ENCODE measurements at regions of chr6 and their contacts with region 1.

Region 1: DNA sequence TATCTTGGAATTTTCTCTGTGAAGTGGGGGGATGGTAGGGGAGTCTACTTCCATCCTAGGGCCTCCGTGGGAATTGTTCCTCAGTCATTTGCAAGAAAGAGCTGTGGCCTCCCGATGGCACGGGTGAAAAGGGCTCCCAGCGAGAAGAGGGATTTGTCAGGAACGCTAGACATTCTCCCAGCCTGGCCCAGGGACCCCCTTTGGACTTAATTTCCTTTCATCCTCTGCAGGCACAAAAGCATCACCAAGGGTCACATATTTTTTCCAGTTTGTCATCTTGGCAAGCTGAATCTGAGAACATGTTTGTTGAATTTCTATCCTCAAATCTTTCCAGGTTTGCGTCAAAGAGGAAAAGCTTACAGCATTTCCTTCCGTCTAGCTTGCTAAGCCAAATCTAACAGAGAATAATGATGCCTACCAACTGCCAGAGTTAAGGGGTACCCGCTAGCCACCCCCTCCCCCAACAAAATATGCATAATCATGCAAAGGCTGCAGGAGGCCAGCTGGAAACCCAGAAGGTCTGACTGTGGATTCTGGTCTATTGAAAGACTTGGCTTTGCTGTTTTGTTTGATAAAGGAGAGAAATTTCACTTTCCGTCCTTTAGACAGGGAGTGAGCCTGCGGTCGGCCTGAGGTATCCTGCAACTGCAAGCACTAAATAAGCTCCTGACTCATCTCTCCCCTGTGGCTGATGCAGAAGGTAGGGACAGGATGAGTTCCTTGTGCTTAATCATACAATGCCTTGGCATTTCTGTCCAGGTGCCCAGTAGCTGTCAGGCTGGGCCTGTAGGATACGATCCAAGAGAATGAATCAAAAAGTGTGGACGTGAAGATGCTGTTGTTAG is 23.1 kb downstream of the PSMG4 start:
- DNase-seq: no peak
- ATAC-seq: no peak
- H3K4me3 ChIP-seq: no peak overlapping the region
- H3K27ac ChIP-seq: no peak overlapping the region
- H3K4me1 ChIP-seq: no peaks in the 10 kb centered on the region
- H3K27me3 ChIP-seq: no peaks in the 10 kb centered on the region
- CTCF ChIP-seq: no peak
- EP300 ChIP-seq: no peak
- POLR2A ChIP-seq: no peak
- RAD21 ChIP-seq: no peak

Region 2: DNA sequence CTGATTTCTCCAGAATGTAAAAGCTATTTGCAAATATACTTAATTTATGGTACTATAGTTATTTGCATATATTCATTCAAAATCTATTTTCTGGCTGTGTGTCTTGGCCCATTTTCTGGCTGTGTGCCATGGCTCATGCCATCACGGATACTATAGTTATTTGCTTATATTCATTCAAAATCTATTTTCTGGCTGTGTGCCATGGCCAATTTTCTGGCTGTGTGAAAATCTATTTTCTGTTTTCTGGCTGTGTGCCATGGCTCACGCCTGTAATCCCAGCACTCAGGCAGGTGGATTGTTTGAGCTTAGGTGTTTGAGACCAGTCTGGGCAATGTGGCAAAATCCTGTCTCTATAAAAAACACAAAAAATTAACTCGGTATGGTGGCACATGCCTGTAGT is 242.5 kb before region 1 on chr6:
- CTCF ChIA-PET with region 1: no interaction called
- POLR2A ChIA-PET with region 1: no interaction called
- RAD21 ChIA-PET with region 1: no interaction called
- SMC1A ChIA-PET with region 1: no interaction called
- in situ Hi-C with region 1: no loop called
- intact Hi-C with region 1: no loop called
- DNase-seq: no peak
- ATAC-seq: no peak
- H3K4me3 ChIP-seq: no peak overlapping the region
- H3K27ac ChIP-seq: no peak overlapping the region
- H3K4me1 ChIP-seq: no peaks in the 10 kb centered on the region
- H3K27me3 ChIP-seq: peaks cover 3 to 4% of the 10 kb centered on the region in 2 experiments; a peak in 2 of 4 replicates
- CTCF ChIP-seq: no peak
- EP300 ChIP-seq: no peak
- POLR2A ChIP-seq: no peak
- RAD21 ChIP-seq: no peak

Region 3: GRCh38 chr6:3124667-3125066 is 157.2 kb before region 1 on chr6:
- CTCF ChIA-PET with region 1: interaction called, 3 read pairs
- POLR2A ChIA-PET with region 1: no interaction called
- RAD21 ChIA-PET with region 1: interaction called, 4 read pairs
- SMC1A ChIA-PET with region 1: interaction called, 4 read pairs
- in situ Hi-C with region 1: no loop called
- intact Hi-C with region 1: loop called (anchors 1 kb)
- DNase-seq: no peak
- ATAC-seq: no peak
- H3K4me3 ChIP-seq: no peak overlapping the region
- H3K27ac ChIP-seq: no peak overlapping the region
- H3K4me1 ChIP-seq: peaks cover 7% of the 10 kb centered on the region
- H3K27me3 ChIP-seq: no peaks in the 10 kb centered on the region
- CTCF ChIP-seq: no peak
- EP300 ChIP-seq: no peak
- POLR2A ChIP-seq: no peak
- RAD21 ChIP-seq: no peak

Region 4: DNA sequence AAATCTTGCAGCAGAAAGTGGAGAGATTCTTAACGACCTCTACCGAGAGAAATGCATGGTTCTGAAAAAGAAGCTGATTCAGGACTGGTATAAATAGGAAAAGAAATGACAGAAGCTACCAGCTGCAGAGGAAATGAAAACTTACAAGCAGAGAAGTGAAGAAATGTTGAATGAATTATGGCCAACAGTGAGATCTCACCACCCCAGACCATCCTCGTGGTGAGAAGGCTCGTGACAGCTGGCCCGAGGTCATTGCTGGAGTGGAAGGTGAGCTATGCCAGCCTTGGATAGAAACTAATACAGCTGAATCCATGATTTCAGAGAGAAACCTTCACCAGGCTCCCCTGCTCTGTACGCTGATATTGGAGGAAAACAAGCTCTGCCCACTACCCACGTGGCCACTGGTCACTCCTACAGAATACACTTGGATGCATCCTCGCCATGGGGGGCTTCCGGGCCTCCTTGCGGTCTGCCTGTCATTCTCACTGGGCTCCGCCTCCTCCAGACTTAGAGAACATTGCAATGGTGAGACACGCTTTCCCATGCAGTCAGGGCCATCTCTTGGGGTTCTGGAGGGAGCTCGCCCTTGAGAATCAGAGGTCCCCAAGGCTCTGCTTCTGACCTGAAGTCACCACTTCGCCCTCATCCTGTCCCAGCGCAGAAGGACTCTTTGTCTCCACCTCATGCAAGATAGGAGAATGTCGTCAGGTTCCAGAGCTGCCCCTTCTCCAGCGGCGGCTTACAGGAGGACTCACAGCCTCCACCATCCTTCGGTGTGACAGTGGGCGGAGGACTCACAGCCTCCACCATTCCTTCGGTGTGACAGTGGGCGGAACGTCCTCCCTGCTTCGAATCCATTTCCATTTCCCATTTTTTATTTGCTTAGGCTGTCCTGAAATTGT is 43.8 kb before region 1 on chr6:
- CTCF ChIA-PET with region 1: no interaction called
- POLR2A ChIA-PET with region 1: no interaction called
- RAD21 ChIA-PET with region 1: no interaction called
- SMC1A ChIA-PET with region 1: no interaction called
- in situ Hi-C with region 1: no loop called
- intact Hi-C with region 1: no loop called
- DNase-seq: no peak
- ATAC-seq: peak; percentile 32
- H3K4me3 ChIP-seq: no peak overlapping the region
- H3K27ac ChIP-seq: no peak overlapping the region
- H3K4me1 ChIP-seq: peaks cover 31% of the 10 kb centered on the region
- H3K27me3 ChIP-seq: peaks cover 0 to 3% of the 10 kb centered on the region in 2 experiments; a peak in 2 of 4 replicates
- CTCF ChIP-seq: no peak
- EP300 ChIP-seq: no peak
- POLR2A ChIP-seq: no peak
- RAD21 ChIP-seq: no peak

Region 5: DNA sequence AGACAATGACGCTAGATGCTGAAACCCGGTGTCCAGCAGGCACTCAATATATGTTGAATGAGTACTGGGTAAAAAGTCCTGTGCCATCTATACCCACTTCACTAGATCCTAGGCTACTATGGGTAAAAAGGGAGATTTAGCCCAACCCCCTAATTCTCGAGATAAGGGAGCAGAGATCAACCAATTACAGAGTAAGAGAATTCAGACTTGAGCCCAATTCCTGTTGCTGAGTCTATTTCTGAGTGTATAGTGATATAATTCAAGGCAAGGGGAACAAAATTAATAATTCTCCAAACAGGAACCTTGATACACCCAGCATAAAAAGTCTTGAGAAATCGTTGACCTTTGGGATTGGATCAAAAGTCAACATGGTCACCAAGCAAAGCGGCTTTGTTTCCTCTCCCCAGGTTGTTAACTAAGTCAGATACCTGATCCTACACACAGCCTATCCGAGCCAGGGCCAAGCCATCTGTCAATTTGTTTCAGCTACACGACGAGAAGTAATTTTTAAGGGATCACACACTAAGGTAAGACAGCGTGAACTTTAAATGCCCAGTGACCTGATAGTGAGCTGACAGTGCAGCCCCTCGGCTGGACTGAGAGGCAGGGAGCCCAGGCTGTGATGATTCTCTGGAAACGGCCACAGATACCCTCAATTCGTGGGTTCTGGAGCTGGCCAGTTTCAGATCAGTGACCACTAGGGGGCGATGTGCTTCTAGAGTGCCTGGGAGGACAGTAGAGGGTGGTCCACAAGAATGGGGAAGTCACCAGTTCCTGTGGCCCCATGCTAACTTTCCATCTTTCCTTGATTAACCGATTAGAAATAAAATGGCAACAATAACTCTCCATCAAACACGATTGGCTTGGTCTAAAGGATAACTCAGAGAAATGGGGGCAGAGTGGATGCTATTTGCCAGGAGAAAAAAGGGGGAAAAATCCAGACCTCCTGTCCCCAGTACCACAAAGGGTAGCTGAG is 128.8 kb after region 1 on chr6:
- CTCF ChIA-PET with region 1: interaction called, 9 read pairs
- POLR2A ChIA-PET with region 1: no interaction called
- RAD21 ChIA-PET with region 1: interaction called, 7 read pairs
- SMC1A ChIA-PET with region 1: interaction called, 6 read pairs
- in situ Hi-C with region 1: no loop called
- intact Hi-C with region 1: loop called (anchors 5 kb)
- DNase-seq: no peak
- ATAC-seq: peak; percentile 93
- H3K4me3 ChIP-seq: no peak overlapping the region
- H3K27ac ChIP-seq: no peak overlapping the region
- H3K4me1 ChIP-seq: peaks cover 9% of the 10 kb centered on the region
- H3K27me3 ChIP-seq: no peaks in the 10 kb centered on the region
- CTCF ChIP-seq: peak; percentile 55 to 75 (median 73)
- EP300 ChIP-seq: no peak
- POLR2A ChIP-seq: no peak
- RAD21 ChIP-seq: peak; percentile 68

Region 6: DNA sequence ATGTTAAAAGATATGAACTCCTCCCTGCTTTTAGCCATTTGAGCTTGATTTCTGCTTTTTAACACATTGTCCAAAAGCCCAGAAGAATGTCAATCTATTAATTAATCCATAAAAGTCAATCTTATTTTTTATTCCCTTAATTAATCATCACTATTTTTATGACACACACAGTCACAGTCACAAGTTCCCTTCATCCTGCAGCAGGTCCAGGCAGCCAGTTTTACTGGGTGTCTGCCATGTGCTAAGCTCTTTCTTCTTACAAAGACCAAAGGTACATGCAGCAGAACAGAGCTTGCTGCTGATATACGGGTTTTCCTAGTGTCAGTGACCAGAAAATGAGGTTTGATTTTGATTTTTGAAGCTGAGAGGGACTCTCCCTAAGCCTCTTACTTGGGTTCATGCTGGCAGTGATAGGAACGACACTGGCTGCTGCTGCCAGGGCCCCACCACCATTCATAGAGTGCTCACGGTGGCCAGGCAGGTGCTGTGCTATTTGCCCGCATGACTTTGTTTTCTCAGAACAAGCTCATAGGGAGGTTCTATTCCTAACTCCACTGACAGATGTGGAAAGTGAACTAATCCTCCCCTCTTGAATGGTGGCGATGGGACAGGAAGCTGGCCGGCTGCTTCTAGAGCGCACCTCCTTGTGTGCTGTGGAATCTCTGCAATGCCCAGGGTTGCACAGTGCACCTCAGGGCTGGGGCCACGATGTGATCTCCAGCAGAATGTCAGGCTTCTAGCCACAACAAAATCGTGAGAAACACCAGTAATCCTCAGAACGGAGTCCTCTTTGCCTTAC is 228.5 kb after region 1 on chr6:
- CTCF ChIA-PET with region 1: no interaction called
- POLR2A ChIA-PET with region 1: no interaction called
- RAD21 ChIA-PET with region 1: no interaction called
- SMC1A ChIA-PET with region 1: interaction called, 3 read pairs
- in situ Hi-C with region 1: no loop called
- intact Hi-C with region 1: loop called (anchors 5 kb)
- DNase-seq: no peak
- ATAC-seq: no peak
- H3K4me3 ChIP-seq: no peak overlapping the region
- H3K27ac ChIP-seq: no peak overlapping the region
- H3K4me1 ChIP-seq: no peaks in the 10 kb centered on the region
- H3K27me3 ChIP-seq: no peaks in the 10 kb centered on the region; a peak in 2 of 4 replicates
- CTCF ChIP-seq: no peak
- EP300 ChIP-seq: no peak
- POLR2A ChIP-seq: no peak
- RAD21 ChIP-seq: no peak

Region 7: GRCh38 chr6:3732345-3733141 is 450.7 kb after region 1 on chr6:
- CTCF ChIA-PET with region 1: interaction called, 39 read pairs
- POLR2A ChIA-PET with region 1: no interaction called
- RAD21 ChIA-PET with region 1: interaction called, 55 read pairs
- SMC1A ChIA-PET with region 1: interaction called, 51 read pairs
- in situ Hi-C with region 1: loop called (anchors 5 kb)
- intact Hi-C with region 1: loop called (anchors 1 kb)
- DNase-seq: no peak
- ATAC-seq: peak; percentile 96
- H3K4me3 ChIP-seq: no peak overlapping the region
- H3K27ac ChIP-seq: no peak overlapping the region
- H3K4me1 ChIP-seq: no peaks in the 10 kb centered on the region
- H3K27me3 ChIP-seq: no peaks in the 10 kb centered on the region
- CTCF ChIP-seq: peak; percentile 91 to 95 (median 91)
- EP300 ChIP-seq: no peak
- POLR2A ChIP-seq: no peak
- RAD21 ChIP-seq: peak; percentile 92

Region 8: GRCh38 chr6:3990692-3991501 is 709.0 kb after region 1 on chr6:
- CTCF ChIA-PET with region 1: no interaction called
- POLR2A ChIA-PET with region 1: no interaction called
- RAD21 ChIA-PET with region 1: no interaction called
- SMC1A ChIA-PET with region 1: no interaction called
- in situ Hi-C with region 1: no loop called
- intact Hi-C with region 1: loop called (anchors 5 kb)
- DNase-seq: no peak
- ATAC-seq: peak; percentile 97
- H3K4me3 ChIP-seq: no peak overlapping the region
- H3K27ac ChIP-seq: no peak overlapping the region
- H3K4me1 ChIP-seq: no peaks in the 10 kb centered on the region
- H3K27me3 ChIP-seq: no peaks in the 10 kb centered on the region
- CTCF ChIP-seq: peak; percentile 82 to 88 (median 85)
- EP300 ChIP-seq: no peak
- POLR2A ChIP-seq: no peak
- RAD21 ChIP-seq: peak; percentile 81